Body of pancreas (tissue), 4 donors: ENCODE measurements at regions of chr5 and their contacts with region 1.

Region 1: GRCh38 chr5:79702606-79703382 is 13.2 kb downstream of the CMYA5 start:
- DNase-seq: peak in 2 of 4 donors; percentile 6 to 14
- ATAC-seq: no peak
- H3K4me3 ChIP-seq: no peak overlapping the region
- H3K27ac ChIP-seq: no peak overlapping the region
- H3K4me1 ChIP-seq: no peaks in the 10 kb centered on the region
- H3K27me3 ChIP-seq: no peaks in the 10 kb centered on the region
- CTCF ChIP-seq: peak in 5 of 7 experiments; percentile 15 to 39 (median 26)
- POLR2A ChIP-seq: no peak

Region 2: DNA sequence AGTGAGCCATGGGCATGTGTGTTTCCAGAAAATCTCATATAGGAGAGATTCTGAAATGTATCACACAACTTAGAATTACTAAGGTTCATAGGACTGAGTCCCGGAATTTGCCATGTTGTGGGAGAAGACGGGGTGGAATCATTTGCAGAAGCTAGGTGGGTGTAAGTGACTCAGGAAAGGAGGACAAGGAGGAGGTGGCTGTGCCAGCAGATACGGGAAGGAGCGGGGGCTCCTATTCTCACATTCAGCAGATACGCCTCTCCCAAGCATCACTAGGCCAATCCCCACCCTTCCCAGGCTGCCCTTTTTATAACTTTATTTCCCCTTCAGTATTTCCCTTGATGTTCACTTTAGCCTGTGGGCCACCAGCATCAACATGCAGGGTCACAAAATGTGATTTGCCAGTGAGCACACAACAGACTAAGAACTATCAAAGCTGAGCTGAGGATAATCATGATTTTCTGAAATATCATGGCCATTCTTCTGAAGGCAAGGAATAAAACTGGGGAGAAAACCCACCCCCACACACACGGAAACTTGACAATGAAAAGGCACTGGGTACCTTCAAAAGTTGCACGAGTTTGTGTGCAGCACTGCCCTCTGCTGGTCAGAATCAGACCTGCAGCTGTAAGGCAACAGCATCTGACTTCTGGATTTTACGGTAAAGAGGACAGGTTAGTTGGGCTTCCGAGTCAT is 155.1 kb after region 1 on chr5:
- intact Hi-C with region 1: loop called (anchors 10 kb)
- DNase-seq: peak; percentile 68 to 84 (median 76)
- ATAC-seq: peak; percentile 74
- H3K4me3 ChIP-seq: no peak overlapping the region
- H3K27ac ChIP-seq: no peak overlapping the region
- H3K4me1 ChIP-seq: no peaks in the 10 kb centered on the region
- H3K27me3 ChIP-seq: no peaks in the 10 kb centered on the region
- CTCF ChIP-seq: peak; percentile 85 to 92 (median 87)
- POLR2A ChIP-seq: no peak